ENCODE measurements at regions of chr12 and their contacts with region 1.

Region 1: DNA sequence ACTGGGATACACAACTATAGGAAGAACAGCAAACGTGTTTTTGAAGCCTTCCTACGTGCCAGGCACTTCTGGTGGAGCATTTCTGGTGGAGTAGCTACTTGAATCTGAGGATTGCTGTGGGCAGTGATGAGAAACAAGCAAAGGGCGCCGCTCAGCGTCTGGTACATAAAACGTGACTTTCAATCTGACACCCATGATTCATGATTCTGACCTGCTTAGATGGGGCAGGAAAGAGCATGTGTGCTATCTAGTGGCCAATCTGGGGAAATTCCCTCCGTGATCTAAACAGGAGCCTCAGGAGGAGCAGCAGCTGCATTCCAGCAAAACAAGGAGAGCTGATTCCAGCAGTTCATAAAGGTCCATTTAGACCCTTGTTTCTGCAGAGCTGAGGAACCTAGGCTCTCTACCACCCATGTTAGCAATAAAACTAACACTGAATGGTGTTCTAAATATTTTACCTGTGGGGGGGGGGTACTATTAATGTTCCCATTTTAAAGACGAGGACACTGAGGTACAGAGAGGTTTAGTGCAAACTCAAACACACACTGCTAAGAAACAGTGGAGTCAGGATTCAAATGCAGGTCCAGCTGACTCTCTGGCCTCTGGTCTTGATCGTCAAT is 37.8 kb downstream of the PAH start:
- DNase-seq: peak; percentile 47 to 57
- H3K4me3 ChIP-seq: no peak overlapping the region; a peak in 1 of 8 replicates
- H3K27ac ChIP-seq: no peak overlapping the region
- H3K4me1 ChIP-seq: peaks cover 0 to 3% (median 0%) of the 10 kb centered on the region in 4 experiments; a peak in 2 of 7 replicates
- H3K27me3 ChIP-seq: no peaks in the 10 kb centered on the region
- CTCF ChIP-seq: peak; percentile 46 to 97 (median 95)
- EP300 ChIP-seq: no peak
- POLR2A ChIP-seq: no peak
- RAD21 ChIP-seq: peak; percentile 92 to 93

Region 2: GRCh38 chr12:102816816-102817434 is 62.3 kb before region 1 on chr12:
- CTCF ChIA-PET with region 1: interaction called, 18 read pairs
- POLR2A ChIA-PET with region 1: no interaction called
- DNase-seq: no peak
- H3K4me3 ChIP-seq: no peak overlapping the region
- H3K27ac ChIP-seq: no peak overlapping the region
- H3K4me1 ChIP-seq: peaks cover 0 to 3% (median 0%) of the 10 kb centered on the region in 4 experiments; a peak in 2 of 7 replicates
- H3K27me3 ChIP-seq: no peaks in the 10 kb centered on the region
- CTCF ChIP-seq: peak in 2 of 3 experiments; percentile 51 to 61; a peak in 3 of 4 replicates
- EP300 ChIP-seq: no peak
- POLR2A ChIP-seq: no peak
- RAD21 ChIP-seq: peak; percentile 53 to 62; a peak in 3 of 4 replicates

Region 3: GRCh38 chr12:102847131-102847530 is 32.1 kb before region 1 on chr12:
- CTCF ChIA-PET with region 1: interaction called, 18 read pairs
- POLR2A ChIA-PET with region 1: no interaction called
- DNase-seq: no peak
- H3K4me3 ChIP-seq: no peak overlapping the region
- H3K27ac ChIP-seq: no peak overlapping the region
- H3K4me1 ChIP-seq: no peaks in the 10 kb centered on the region
- H3K27me3 ChIP-seq: no peaks in the 10 kb centered on the region
- CTCF ChIP-seq: no peak
- EP300 ChIP-seq: no peak
- POLR2A ChIP-seq: no peak
- RAD21 ChIP-seq: no peak

Region 4: GRCh38 chr12:102891756-102892155 is 12.5 kb after region 1 on chr12:
- CTCF ChIA-PET with region 1: interaction called, 25 read pairs
- POLR2A ChIA-PET with region 1: no interaction called
- DNase-seq: no peak
- H3K4me3 ChIP-seq: no peak overlapping the region
- H3K27ac ChIP-seq: no peak overlapping the region
- H3K4me1 ChIP-seq: peaks cover 0 to 6% (median 5%) of the 10 kb centered on the region in 4 experiments; a peak in 6 of 7 replicates
- H3K27me3 ChIP-seq: no peaks in the 10 kb centered on the region; a peak in 1 of 7 replicates
- CTCF ChIP-seq: no peak
- EP300 ChIP-seq: no peak
- POLR2A ChIP-seq: no peak
- RAD21 ChIP-seq: no peak

Region 5: DNA sequence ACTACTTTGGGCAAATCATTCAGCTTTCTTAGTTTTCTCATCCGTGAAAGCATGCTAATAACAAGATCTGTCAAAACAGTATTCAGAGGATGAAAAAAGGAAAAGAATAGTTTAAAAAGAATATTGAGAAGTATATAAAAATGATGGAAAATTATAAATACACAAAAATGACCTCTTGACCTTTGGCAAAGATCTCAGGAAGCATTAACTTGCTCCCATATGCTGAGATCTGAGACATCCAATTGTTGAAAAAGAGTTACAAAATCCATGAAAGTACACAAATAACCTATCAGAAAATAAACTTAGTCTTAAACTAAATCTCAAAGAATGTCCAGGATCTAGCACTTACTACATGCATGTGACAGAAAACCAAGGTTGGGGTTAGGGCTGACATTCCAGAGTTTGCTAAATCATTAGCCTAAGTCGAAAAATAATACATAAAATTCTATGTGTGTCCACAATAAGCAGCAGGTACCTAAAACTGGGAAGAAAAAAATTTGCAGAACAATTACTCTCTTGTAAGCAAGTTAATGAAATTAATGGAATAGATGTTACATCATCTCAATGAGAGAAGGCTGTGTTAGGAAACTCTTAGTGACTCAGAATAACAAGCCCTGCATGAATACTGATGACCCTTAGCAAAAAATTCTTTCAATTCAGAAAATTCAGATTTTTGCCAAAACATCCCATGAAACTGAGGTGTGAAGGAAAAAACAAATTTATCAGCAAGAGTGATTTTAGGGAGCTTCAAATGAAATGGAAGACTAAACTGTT is 34.4 kb after region 1 on chr12:
- CTCF ChIA-PET with region 1: interaction called, 14 read pairs
- POLR2A ChIA-PET with region 1: no interaction called
- DNase-seq: no peak
- H3K4me3 ChIP-seq: no peak overlapping the region
- H3K27ac ChIP-seq: no peak overlapping the region
- H3K4me1 ChIP-seq: peaks cover 2 to 10% (median 5%) of the 10 kb centered on the region in 4 experiments; a peak in 4 of 7 replicates
- H3K27me3 ChIP-seq: no peaks in the 10 kb centered on the region
- CTCF ChIP-seq: no peak
- EP300 ChIP-seq: no peak
- POLR2A ChIP-seq: no peak
- RAD21 ChIP-seq: no peak

Region 6: GRCh38 chr12:102939670-102940222 is 60.5 kb after region 1 on chr12:
- CTCF ChIA-PET with region 1: interaction called, 56 read pairs
- POLR2A ChIA-PET with region 1: no interaction called
- DNase-seq: no peak
- H3K4me3 ChIP-seq: no peak overlapping the region
- H3K27ac ChIP-seq: no peak overlapping the region
- H3K4me1 ChIP-seq: no peaks in the 10 kb centered on the region; a peak in 1 of 7 replicates
- H3K27me3 ChIP-seq: no peaks in the 10 kb centered on the region
- CTCF ChIP-seq: peak in 2 of 3 experiments; percentile 44 to 59; a peak in 3 of 4 replicates
- EP300 ChIP-seq: no peak
- POLR2A ChIP-seq: no peak
- RAD21 ChIP-seq: peak; percentile 77

Region 7: DNA sequence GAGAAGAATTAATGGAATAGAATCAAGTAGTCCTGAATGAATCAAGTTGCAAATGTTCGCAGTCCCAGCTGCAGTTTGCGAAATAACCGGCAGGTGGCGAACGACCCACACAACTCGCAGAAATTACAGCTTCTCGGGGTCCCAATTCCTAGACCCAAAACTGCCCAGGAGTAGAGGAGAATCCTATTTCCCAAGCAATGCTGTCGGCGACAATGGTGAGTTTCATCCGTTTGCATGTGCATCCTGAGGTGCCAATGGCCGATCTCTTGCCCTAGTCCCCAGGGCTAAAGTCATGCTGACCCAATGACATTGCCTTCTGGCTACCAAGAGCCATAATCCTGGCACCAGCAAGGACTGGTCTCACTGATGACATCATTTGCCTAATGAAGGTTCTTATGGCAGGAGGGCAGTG is 69.7 kb after region 1 on chr12:
- CTCF ChIA-PET with region 1: interaction called, 13 read pairs
- POLR2A ChIA-PET with region 1: no interaction called
- DNase-seq: peak in 1 of 2 experiments; percentile 94
- H3K4me3 ChIP-seq: no peak overlapping the region
- H3K27ac ChIP-seq: no peak overlapping the region
- H3K4me1 ChIP-seq: peaks cover 5 to 14% (median 6%) of the 10 kb centered on the region in 4 experiments
- H3K27me3 ChIP-seq: peaks cover 42 to 54% (median 49%) of the 10 kb centered on the region in 4 experiments
- CTCF ChIP-seq: peak; percentile 83 to 91 (median 84)
- EP300 ChIP-seq: no peak
- POLR2A ChIP-seq: no peak
- RAD21 ChIP-seq: peak; percentile 95

Measured in H1 (cell line).